AG04450 (cell line): ENCODE measurements at regions of chr4 and their contacts with region 1.

Region 1: GRCh38 chr4:56641494-56642051 is 39.5 kb downstream of the HOPX start:
- DNase-seq: peak; percentile 83
- H3K4me3 ChIP-seq: no peak overlapping the region
- H3K27ac ChIP-seq: no peak overlapping the region
- H3K27me3 ChIP-seq: peaks cover 2% of the 10 kb centered on the region
- CTCF ChIP-seq: peak; percentile 42

Region 2: GRCh38 chr4:56544573-56545131 is 96.9 kb before region 1 on chr4:
- CTCF ChIA-PET with region 1: interaction called, 24 read pairs
- POLR2A ChIA-PET with region 1: no interaction called
- DNase-seq: peak; percentile 63
- H3K4me3 ChIP-seq: peak overlapping the region; percentile 58
- H3K27ac ChIP-seq: no peak overlapping the region
- H3K27me3 ChIP-seq: peaks cover 7% of the 10 kb centered on the region
- CTCF ChIP-seq: peak; percentile 96

Region 3: DNA sequence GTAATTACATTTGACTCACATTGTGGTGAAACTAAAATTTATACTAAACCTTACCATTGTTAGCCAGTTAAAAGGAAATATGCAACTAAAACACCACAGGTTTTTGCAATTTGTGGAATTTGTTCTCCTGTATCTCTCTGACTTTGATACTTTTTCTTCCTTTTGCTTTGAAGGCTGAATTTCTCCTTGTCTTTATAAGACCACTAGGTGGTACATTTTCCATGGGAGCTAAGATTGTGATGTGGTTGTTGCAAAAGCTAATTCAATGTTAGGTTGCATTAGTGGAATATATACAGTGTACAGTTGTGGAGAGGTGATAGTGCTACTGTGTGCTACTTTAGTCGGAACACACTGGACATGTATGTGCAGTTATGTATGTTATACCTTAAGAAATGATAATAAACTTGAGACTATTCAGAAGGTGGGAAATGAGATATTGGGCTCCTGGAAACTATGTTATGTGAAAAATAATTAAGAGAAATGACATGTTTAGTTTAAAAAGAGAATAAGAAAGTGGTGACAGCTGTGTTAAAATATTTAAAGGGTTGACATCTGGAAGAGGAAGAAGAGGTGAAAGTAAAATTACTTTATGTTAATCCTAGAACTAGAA is 65.6 kb before region 1 on chr4:
- CTCF ChIA-PET with region 1: interaction called, 15 read pairs
- POLR2A ChIA-PET with region 1: no interaction called
- DNase-seq: peak; percentile 34
- H3K4me3 ChIP-seq: no peak overlapping the region
- H3K27ac ChIP-seq: no peak overlapping the region
- H3K27me3 ChIP-seq: no peaks in the 10 kb centered on the region
- CTCF ChIP-seq: peak; percentile 79

Region 4: DNA sequence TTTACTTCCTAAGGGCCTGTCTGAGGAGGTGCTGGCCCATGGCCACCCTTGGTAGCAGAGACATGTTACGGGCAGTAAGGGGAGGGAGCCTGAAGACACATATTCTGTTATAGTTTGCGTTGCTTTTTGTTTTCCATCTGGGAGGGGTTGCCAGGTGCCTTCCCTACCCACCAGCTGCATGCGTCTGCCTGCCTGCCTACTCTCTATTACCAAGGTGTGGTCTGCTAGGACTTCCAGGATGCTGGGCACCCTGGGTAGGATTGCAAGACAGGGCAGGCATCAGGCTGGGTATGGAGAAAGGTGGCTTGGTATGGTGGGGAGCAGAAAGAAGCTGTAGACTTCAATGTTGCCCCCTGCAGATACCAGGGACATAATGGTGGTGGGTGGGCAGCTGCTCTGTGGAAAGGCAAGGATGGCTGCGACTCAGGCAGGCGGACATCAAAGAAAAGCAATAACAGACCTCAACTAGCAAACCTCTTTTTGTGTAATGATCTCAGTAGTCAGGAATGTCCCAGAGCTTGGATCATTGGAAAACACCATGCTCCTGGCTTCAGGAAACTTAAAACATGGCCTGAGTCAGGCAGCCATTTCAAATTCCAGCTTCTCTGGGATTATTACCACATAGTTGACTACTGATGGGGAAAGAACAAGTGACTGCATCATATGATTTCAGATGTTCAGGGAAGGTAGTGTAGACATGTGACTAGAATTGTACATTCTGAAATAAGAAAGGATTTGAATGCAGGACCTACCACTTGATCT is 28.3 kb before region 1 on chr4:
- CTCF ChIA-PET with region 1: interaction called, 21 read pairs
- POLR2A ChIA-PET with region 1: interaction called, 15 read pairs
- DNase-seq: peak; percentile 63
- H3K4me3 ChIP-seq: no peak overlapping the region
- H3K27ac ChIP-seq: peak overlapping the region; percentile 31
- H3K27me3 ChIP-seq: peaks cover 7% of the 10 kb centered on the region
- CTCF ChIP-seq: no peak

Region 5: DNA sequence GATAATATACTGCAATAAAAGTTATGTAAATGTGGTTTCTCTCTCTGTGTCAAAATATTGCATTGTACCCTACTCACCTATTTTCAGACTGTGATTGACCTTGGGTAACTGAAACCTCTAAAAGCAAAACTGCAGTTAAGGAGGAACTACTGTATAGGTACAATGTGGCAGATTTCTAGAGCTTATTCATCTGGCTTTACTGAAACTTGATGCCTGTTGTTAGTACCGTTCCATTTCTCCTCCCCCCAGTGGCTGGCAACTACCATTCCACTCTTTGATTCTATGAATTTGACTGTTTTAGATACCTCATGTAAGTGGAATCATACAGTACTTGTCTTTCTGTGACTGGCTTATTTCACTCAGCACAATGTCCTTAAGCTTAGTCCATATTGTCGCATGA is 22.4 kb before region 1 on chr4:
- CTCF ChIA-PET with region 1: interaction called, 21 read pairs
- POLR2A ChIA-PET with region 1: interaction called, 15 read pairs
- DNase-seq: no peak
- H3K4me3 ChIP-seq: no peak overlapping the region
- H3K27ac ChIP-seq: no peak overlapping the region
- H3K27me3 ChIP-seq: peaks cover 5% of the 10 kb centered on the region
- CTCF ChIP-seq: peak; percentile 28; the same call in 1 of the 2 replicates

Region 6: GRCh38 chr4:56626963-56627362 is 14.6 kb before region 1 on chr4:
- CTCF ChIA-PET with region 1: interaction called, 14 read pairs
- POLR2A ChIA-PET with region 1: interaction called, 3 read pairs
- DNase-seq: no peak
- H3K4me3 ChIP-seq: no peak overlapping the region
- H3K27ac ChIP-seq: no peak overlapping the region
- H3K27me3 ChIP-seq: peaks cover 2% of the 10 kb centered on the region
- CTCF ChIP-seq: no peak

Region 7: GRCh38 chr4:56698329-56698728 is 56.8 kb after region 1 on chr4:
- CTCF ChIA-PET with region 1: no interaction called
- POLR2A ChIA-PET with region 1: no interaction called
- DNase-seq: peak; percentile 8
- H3K4me3 ChIP-seq: no peak overlapping the region
- H3K27ac ChIP-seq: no peak overlapping the region
- H3K27me3 ChIP-seq: no peaks in the 10 kb centered on the region
- CTCF ChIP-seq: no peak